Lower leg skin (tissue), 4 donors: ENCODE measurements at regions of chr6 and their contacts with region 1.

Region 1: DNA sequence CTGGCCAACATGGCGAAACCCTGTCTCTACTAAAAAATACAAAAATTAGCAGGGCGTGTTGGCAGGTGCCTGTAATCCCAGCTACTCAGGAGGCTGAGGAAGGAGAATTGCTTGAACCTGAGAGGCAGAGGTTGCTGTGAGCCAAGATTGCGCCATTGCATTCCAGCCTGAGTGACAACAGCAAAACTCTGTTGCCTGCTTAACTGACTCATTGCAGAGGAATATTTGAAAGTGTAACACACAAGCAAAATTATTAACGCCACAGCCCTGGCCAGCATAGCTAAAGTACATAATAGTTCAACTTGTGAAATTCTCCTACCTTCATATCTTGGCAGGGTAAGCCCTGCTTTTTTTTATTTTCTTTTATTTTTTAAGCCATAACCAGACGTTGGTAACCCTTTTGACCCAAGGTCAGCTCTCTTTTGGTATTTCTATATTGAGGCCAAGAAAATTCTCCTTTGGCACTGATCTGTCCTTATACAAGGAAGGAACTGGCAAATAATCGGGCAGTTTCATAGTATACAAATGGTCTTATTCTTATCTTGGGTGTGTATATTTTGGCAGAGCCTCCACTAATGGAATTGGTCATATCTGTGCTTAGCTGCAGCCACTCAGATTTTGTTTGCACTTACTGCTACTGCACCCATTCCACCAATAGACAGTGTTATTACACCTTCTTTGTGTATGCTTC is 4.0 kb upstream of the ADGRF5 start:
- DNase-seq: peak in 1 of 2 donors; percentile 21
- H3K4me3 ChIP-seq: no peak overlapping the region
- CTCF ChIP-seq: no peak
- POLR2A ChIP-seq: no peak

Region 2: DNA sequence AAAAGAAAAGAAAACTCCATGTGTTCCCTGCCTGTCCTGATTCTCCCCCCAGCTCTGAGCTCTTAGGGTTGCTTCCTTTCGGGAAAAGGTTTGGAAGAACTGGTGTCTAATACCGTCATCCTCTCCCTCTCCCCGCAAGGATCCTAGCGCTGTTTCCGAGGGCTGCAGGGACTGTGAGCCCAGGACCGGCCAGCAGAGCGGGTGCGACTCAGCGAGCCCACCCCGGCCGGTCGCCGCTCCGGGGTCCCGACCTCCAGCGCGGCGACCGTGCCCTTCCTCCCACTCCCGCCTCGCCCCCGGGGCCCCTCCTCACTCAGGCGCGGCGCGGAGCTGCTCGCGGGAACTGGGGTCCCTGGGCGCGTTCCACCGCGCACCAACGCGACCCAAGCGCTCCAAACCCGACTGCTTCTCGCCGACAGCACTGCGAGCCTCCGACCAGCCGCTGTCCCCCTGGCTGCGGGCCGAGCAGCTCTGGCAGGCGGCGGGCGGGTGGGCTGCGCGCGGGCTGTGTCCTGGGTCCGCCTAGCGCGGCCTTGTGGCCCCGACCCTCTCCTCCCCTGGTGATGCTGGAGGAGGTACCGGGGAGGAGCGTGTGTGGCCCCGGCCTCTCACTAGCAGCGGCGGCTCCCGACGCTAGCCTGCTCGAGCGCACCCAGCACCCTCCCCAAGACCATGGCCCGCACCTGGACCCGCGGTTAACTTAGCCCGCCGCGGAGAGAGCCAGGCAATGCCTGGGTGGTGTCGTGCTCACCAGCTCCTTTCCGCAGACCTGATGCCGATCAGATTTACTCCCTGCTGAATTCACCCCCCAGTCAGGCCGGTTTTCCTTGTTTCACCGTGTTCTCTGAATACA is 190.6 kb before region 1 on chr6 and contains the start of gene PLA2G7:
- intact Hi-C with region 1: no loop called
- DNase-seq: no peak
- H3K4me3 ChIP-seq: peak within 1 kb of the TSS; percentile 34
- CTCF ChIP-seq: no peak
- POLR2A ChIP-seq: no peak
- total RNA-seq, gene PLA2G7: 0.61 to 7.1 (median 2.0) TPM

Region 3: DNA sequence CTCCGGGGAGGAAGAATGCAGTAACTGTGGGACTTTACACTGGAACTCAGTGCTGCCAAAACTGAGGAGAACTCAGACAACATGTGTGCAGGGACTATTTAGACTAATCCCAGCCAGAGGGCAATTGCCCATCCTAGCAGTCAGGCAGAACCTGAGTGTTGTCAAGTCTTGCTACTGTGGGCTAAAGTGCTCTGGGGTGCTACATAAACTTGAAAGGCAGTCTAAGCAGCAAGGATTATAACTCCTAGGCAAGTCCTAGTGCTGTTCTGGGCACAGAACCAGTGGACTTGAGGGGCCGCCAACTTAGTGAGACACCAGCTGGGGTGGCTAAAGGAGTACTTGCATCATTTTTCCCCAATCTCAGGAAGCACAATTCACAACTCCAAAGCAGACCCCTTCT is 1549.1 kb after region 1 on chr6:
- intact Hi-C with region 1: loop called (anchors 5 kb)
- DNase-seq: no peak
- H3K4me3 ChIP-seq: no peak overlapping the region
- CTCF ChIP-seq: no peak
- POLR2A ChIP-seq: no peak